MCF 10A (cell line): ENCODE measurements at regions of chr6 and their contacts with region 1.

Region 1: DNA sequence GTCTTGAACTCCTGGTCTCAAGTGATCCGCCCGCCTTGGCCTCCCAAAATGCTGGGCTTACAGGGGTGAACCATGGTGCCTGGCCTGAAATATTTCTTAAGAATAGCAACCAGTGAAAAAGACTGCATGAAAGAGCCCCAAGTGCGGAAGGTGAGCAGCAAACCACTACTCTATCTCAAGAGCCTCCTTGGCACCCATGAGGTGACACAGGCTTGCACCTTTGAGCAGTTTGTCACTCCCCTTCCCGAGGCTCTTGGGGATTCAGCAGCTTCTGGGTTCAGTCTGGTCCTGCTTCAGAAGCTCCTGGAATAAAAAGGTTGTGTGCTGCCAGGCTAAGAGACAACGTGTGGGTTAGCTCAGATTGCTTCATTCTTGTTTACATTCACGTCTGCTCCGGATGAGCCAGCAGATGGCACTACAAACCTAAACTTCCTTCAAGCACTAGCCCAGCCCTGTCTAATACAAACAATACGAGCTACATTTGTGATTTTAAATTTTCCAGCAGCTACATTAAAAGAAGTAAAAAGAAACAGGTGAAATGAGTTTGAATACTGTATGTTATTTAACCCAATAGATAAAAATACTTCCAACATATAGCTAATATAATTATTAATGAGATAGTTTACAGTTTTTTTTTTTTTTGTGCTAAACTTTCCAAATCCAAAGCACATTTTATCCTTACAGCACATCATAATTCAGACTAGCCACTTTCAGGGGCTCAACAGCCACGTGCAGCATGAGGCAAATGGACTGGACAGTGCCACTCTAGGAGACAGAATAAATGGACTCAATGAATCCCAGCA is 46.2 kb downstream of the GJA10 start:
- DNase-seq: peak; percentile 80
- H3K4me3 Mint-ChIP-seq: no peak overlapping the region
- H3K27ac Mint-ChIP-seq: no peak overlapping the region
- H3K4me1 Mint-ChIP-seq: peaks cover 12% of the 10 kb centered on the region
- H3K27me3 Mint-ChIP-seq: no peaks in the 10 kb centered on the region
- CTCF ChIP-seq: peak; percentile 67

Region 2: DNA sequence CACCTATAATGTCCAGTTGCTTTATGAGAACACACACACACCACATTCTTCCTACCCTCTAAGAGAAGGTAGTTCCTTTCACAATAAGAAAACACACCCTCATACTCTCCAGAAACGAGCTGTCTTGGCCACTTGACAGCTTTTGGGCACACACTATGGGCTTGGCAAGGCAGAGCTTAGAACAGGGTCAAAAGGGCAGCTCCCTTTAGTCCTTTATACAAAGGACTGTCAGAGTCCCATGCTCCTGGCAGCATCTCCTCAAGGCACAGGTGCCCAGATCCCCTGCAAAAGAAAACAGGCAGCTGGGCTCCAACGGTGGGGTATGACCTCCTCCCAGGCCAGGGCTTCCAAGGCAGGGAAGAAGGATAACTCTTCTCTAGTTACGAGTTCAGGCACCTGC is 297.0 kb before region 1 on chr6:
- CTCF ChIA-PET with region 1: no interaction called
- POLR2A ChIA-PET with region 1: no interaction called
- intact Hi-C with region 1: no loop called
- DNase-seq: no peak
- H3K4me3 Mint-ChIP-seq: no peak overlapping the region
- H3K27ac Mint-ChIP-seq: no peak overlapping the region
- H3K4me1 Mint-ChIP-seq: peaks cover 24% of the 10 kb centered on the region
- H3K27me3 Mint-ChIP-seq: no peaks in the 10 kb centered on the region
- CTCF ChIP-seq: no peak

Region 3: GRCh38 chr6:89928604-89929003 is 11.8 kb before region 1 on chr6:
- CTCF ChIA-PET with region 1: interaction called, 28 read pairs
- POLR2A ChIA-PET with region 1: interaction called, 6 read pairs
- intact Hi-C with region 1: no loop called
- DNase-seq: no peak
- H3K4me3 Mint-ChIP-seq: no peak overlapping the region
- H3K27ac Mint-ChIP-seq: no peak overlapping the region
- H3K4me1 Mint-ChIP-seq: peaks cover 32% of the 10 kb centered on the region
- H3K27me3 Mint-ChIP-seq: no peaks in the 10 kb centered on the region
- CTCF ChIP-seq: no peak

Region 4: GRCh38 chr6:89970609-89971337 is 30.3 kb after region 1 on chr6:
- CTCF ChIA-PET with region 1: interaction called, 42 read pairs
- POLR2A ChIA-PET with region 1: no interaction called
- intact Hi-C with region 1: loop called (anchors 1 kb)
- DNase-seq: peak; percentile 68
- H3K4me3 Mint-ChIP-seq: no peak overlapping the region
- H3K27ac Mint-ChIP-seq: no peak overlapping the region
- H3K4me1 Mint-ChIP-seq: no peaks in the 10 kb centered on the region
- H3K27me3 Mint-ChIP-seq: no peaks in the 10 kb centered on the region
- CTCF ChIP-seq: peak; percentile 58

Region 5: GRCh38 chr6:89984926-89985750 is 44.7 kb after region 1 on chr6:
- CTCF ChIA-PET with region 1: interaction called, 11 read pairs
- POLR2A ChIA-PET with region 1: no interaction called
- intact Hi-C with region 1: no loop called
- DNase-seq: peak; percentile 33
- H3K4me3 Mint-ChIP-seq: no peak overlapping the region
- H3K27ac Mint-ChIP-seq: no peak overlapping the region
- H3K4me1 Mint-ChIP-seq: peaks cover 13% of the 10 kb centered on the region
- H3K27me3 Mint-ChIP-seq: no peaks in the 10 kb centered on the region
- CTCF ChIP-seq: no peak

Region 6: DNA sequence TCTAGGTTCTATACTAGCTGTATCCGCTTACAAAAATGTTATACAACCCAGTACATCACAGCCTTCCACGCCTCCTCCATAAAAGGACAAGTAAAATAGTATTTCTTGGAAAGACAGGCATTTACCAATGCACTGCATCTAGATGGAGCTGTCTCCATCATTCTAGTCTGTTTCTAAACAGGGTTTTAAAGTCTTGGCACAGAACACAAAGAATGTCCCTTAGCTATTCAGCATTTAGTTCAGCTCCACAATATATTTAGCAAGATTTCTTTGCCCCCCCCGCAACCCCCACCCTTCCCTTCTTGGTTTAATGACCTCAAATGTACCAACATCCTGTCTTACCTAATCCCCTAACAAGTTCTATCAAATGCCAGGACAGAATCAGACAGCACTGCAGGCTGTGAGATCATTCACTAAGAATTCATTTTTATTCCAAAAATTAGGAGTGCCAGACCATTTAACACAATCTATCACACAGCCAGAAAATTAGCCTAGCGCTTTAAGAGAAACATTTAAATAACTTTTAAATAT is 157.6 kb after region 1 on chr6:
- CTCF ChIA-PET with region 1: interaction called, 13 read pairs
- POLR2A ChIA-PET with region 1: no interaction called
- intact Hi-C with region 1: no loop called
- DNase-seq: peak; percentile 97
- H3K4me3 Mint-ChIP-seq: no peak overlapping the region
- H3K27ac Mint-ChIP-seq: peak overlapping the region; percentile 96
- H3K4me1 Mint-ChIP-seq: peaks cover 43% of the 10 kb centered on the region
- H3K27me3 Mint-ChIP-seq: no peaks in the 10 kb centered on the region
- CTCF ChIP-seq: peak; percentile 40

Region 7: DNA sequence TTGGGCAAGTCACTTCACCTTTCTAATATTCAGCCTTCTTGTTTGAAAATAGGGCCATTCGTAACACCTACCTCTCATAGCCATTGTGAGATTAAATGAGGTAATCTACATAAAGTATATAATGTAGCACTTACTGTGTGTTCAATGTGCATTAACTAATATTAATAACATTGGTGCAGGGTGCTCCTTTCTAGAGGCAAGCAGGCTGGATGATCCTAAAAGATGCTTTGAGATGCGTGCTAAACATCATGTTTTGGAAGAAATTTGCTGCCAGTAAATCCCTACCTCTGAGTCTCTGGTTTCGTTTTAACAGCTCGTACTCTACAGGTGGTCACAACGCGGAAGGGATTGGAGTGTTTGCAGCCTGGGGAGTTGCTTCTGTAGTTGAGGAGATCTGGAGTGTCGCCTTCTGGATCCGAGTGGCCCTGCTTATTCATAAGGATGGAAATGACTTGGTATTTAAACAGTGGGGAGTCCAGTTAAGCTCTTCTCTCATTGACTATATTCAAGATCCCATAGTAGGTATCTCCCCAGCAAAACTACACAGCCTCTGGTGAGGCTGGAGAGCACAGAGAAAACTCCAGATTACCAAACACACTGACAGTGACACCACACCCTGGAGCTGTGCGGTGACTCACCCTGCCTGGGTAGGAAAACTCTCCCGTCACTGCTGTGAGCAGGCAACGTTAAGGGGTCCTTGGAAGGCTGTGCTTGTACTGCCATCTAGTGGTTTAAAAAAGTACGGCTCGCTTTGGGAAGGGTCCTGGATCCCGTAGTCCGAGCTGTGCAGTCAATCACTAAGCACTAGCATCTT is 538.6 kb after region 1 on chr6:
- CTCF ChIA-PET with region 1: interaction called, 200 read pairs
- POLR2A ChIA-PET with region 1: interaction called, 15 read pairs
- intact Hi-C with region 1: loop called (anchors 1 kb)
- DNase-seq: peak; percentile 96
- H3K4me3 Mint-ChIP-seq: no peak overlapping the region
- H3K27ac Mint-ChIP-seq: peak overlapping the region; percentile 32
- H3K4me1 Mint-ChIP-seq: peaks cover 18% of the 10 kb centered on the region
- H3K27me3 Mint-ChIP-seq: no peaks in the 10 kb centered on the region
- CTCF ChIP-seq: peak; percentile 71